ENCODE measurements at regions of chr9 and their contacts with region 1.

Region 1: GRCh38 chr9:127715394-127716337 is at the starts of genes PTRH1 and TTC16:
- DNase-seq: peak; percentile 95 to 97 (median 96)
- H3K4me3 ChIP-seq: peak within 1 kb of the TSS; percentile 45 to 91
- H3K4me3 Mint-ChIP-seq: peak within 1 kb of the TSS; percentile 95 to 100 (median 99)
- H3K27ac ChIP-seq: peak within 1 kb of the TSS; percentile 71
- H3K27ac Mint-ChIP-seq: peak within 1 kb of the TSS; percentile 83 to 99 (median 98)
- H3K4me1 ChIP-seq: peaks cover 45% of the 10 kb centered on the region
- H3K4me1 Mint-ChIP-seq: peaks cover 26 to 41% (median 34%) of the 10 kb centered on the region in 4 donors
- H3K27me3 ChIP-seq: no peaks in the 10 kb centered on the region
- H3K27me3 Mint-ChIP-seq: no peaks in the 10 kb centered on the region
- total RNA-seq, gene PTRH1: 7.3 to 8.4 TPM
- total RNA-seq, gene TTC16: 2.5 to 2.6 TPM

Region 2: DNA sequence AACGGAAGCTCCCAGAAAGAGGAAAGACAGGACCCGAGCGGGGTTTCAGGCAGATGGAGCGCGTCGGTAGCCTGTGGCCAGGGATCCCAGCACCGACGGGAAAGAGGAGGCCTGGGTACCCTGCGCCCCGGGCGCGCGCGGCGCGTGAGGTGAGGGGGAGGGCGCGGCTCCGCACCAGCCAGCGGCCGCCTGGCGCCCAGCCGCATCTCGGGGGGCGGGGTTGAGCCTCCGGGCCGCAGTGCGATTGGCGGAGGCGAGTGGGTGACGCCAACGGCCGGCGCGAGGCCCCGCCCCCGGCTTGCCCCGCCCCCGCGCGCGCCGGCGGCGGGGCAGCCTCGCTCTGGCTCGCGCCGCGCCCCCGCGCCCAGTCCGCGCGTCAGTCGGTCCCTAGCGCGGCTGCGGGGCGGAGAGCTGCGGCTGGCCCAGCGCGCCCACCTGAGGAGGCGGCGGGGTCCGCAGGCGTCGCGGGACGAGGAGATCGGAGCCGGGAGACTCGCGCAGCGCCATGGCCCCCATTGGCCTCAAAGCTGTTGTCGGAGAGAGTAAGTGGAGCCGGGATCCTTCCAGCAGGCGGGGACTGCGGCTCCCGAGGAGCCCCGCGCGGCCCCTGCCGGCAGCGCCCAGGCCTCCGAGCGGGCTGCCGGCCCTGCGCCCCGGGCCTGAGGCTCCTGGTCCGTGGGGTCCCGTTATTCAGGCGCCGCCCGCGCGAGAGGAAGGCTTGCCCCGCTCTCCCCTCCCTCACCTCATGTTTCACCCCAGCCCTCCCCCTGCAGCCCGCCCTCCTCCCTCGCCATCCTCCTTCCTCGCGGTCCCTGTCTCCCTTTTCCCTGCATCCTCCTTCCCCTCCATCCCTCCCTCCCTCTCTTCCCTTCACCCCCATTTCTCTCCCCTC is 103.5 kb before region 1 on chr9 and contains the start of gene STXBP1:
- CTCF ChIA-PET with region 1: no interaction called
- POLR2A ChIA-PET with region 1: interaction called, 6 read pairs
- intact Hi-C with region 1: loop called (anchors 2 kb)
- DNase-seq: peak; percentile 81 to 88 (median 85)
- H3K4me3 ChIP-seq: peak within 1 kb of the TSS; percentile 54 to 74
- H3K4me3 Mint-ChIP-seq: peak within 1 kb of the TSS; percentile 88 to 98 (median 96)
- H3K27ac ChIP-seq: peak within 1 kb of the TSS; percentile 24
- H3K27ac Mint-ChIP-seq: peak within 1 kb of the TSS; percentile 59 to 93 (median 87)
- H3K4me1 ChIP-seq: peaks cover 32% of the 10 kb centered on the region
- H3K4me1 Mint-ChIP-seq: peaks cover 23 to 45% (median 32%) of the 10 kb centered on the region in 4 donors
- H3K27me3 ChIP-seq: peaks cover 4% of the 10 kb centered on the region
- H3K27me3 Mint-ChIP-seq: peaks cover 5 to 14% of the 10 kb centered on the region in 2 donors
- total RNA-seq, gene STXBP1: 19.9 to 20.9 TPM

Region 3: GRCh38 chr9:127684576-127684975 is 31.1 kb before region 1 on chr9:
- CTCF ChIA-PET with region 1: no interaction called
- POLR2A ChIA-PET with region 1: no interaction called
- intact Hi-C with region 1: no loop called
- DNase-seq: no peak
- H3K4me3 ChIP-seq: no peak overlapping the region
- H3K4me3 Mint-ChIP-seq: no peak overlapping the region
- H3K27ac ChIP-seq: no peak overlapping the region
- H3K27ac Mint-ChIP-seq: no peak overlapping the region
- H3K4me1 ChIP-seq: no peaks in the 10 kb centered on the region
- H3K4me1 Mint-ChIP-seq: no peaks in the 10 kb centered on the region
- H3K27me3 ChIP-seq: no peaks in the 10 kb centered on the region
- H3K27me3 Mint-ChIP-seq: no peaks in the 10 kb centered on the region

Region 4: DNA sequence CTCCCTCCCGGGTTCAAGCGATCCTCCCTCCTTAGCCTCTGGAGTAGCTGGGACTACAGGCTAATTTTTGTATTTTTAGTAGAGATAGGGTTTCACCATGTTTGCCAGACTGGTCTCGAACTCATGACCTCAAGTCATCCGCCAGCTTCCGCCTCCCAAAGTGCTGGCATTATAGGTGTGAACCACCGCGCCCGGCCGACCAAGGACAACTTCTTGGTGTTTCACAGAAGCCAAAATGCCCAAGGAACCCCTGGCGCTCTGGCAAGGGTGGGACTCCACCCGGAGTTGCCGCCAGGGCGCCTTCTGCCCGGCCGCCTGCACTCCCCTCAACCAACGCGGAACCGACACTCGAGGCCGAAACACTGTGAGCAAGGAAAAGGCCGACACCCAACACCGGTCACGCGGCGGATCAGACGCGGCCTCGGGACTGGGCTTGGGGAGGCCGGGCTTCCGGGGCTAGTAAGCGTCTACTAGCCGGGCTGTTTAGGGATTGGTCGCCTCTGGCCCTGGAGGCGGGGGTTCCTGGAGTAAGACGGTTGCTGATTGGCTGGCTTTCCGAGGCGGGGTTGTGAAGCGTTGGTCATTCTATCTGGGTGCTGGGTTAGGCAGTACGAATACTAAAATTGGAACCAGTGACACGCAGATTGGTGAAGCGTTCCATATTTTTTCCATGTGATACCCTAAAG is 16.5 kb before region 1 on chr9:
- CTCF ChIA-PET with region 1: interaction called, 3 read pairs
- POLR2A ChIA-PET with region 1: interaction called, 5 read pairs
- intact Hi-C with region 1: loop called (anchors 1 kb)
- DNase-seq: peak; percentile 79 to 87 (median 81)
- H3K4me3 ChIP-seq: peak overlapping the region; percentile 20 to 52
- H3K4me3 Mint-ChIP-seq: peak overlapping the region; percentile 71 to 88 (median 81)
- H3K27ac ChIP-seq: peak overlapping the region; percentile 10
- H3K27ac Mint-ChIP-seq: peak overlapping the region; percentile 39 to 91 (median 82)
- H3K4me1 ChIP-seq: peaks cover 7% of the 10 kb centered on the region
- H3K4me1 Mint-ChIP-seq: peaks cover 5 to 18% (median 10%) of the 10 kb centered on the region in 4 donors
- H3K27me3 ChIP-seq: no peaks in the 10 kb centered on the region
- H3K27me3 Mint-ChIP-seq: peaks cover 0 to 2% of the 10 kb centered on the region in 2 donors